Psoas muscle (tissue), 8 donors: ENCODE measurements at regions of chr1 and their contacts with region 1.

Region 1: GRCh38 chr1:156728597-156729462 is at the start of gene ISG20L2:
- DNase-seq: peak; percentile 97 to 99
- ATAC-seq: peak; percentile 92 to 94 (median 94)
- H3K4me3 ChIP-seq: peak within 1 kb of the TSS; percentile 80
- H3K27ac ChIP-seq: peak within 1 kb of the TSS; percentile 99
- H3K4me1 ChIP-seq: peaks cover 45% of the 10 kb centered on the region
- H3K27me3 ChIP-seq: no peaks in the 10 kb centered on the region
- CTCF ChIP-seq: no peak
- total RNA-seq, gene ISG20L2: 7.4 to 19.8 (median 16.5) TPM

Region 2: DNA sequence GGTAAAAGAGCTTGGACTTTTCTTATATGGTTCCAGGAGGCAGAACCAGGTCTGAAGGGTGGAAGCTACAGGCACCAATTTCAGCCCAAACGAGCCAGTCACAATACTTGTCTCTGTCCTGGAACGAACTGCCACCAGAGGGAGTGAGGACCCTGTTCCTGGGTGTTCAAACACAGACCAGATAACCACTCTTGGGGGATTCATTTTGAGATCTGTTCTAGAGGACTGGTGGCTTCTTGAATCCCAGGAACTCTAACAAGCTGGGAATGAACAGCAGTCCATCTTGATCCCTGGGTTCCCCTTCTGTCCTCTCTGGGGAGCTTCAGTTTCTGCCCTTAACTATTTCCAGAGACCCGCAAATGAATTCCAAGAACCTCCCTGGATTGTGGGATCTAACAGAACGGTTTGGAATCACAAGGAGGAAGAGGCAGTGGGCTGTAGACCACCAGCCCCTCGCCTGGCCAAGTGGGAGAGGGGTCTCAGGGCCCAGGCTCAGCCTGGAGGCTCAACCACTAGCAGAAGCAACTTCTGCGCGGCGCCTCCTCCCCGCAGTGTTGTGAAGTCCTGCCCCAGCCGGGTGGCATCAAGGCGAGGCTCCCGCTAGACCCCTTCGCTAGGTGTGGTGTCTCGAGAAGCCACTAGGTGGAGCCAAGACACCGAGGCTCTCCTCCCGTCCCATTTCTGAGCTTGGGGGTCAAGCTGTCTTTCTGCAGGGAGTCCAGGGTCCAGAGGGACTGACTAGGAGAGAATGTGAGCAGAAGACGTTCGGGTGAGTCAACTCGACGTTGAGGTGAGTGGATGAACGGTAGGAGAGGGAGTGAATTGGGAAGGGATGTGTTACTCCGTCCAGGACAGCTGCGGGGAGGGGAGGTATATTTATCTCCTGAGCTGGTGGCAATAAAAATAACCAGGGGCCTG is 39.5 kb before region 1 on chr1:
- intact Hi-C with region 1: loop called (anchors 1 to 2 kb)
- DNase-seq: peak; percentile 76 to 87
- ATAC-seq: peak; percentile 87 to 94 (median 90)
- H3K4me3 ChIP-seq: peak overlapping the region; percentile 48
- H3K27ac ChIP-seq: peak overlapping the region; percentile 12
- H3K4me1 ChIP-seq: peaks cover 16% of the 10 kb centered on the region
- H3K27me3 ChIP-seq: peaks cover 0 to 34% (median 10%) of the 10 kb centered on the region in 3 donors
- CTCF ChIP-seq: peak; percentile 93